ENCODE measurements at regions of chr5 and their contacts with region 1.

Region 1: DNA sequence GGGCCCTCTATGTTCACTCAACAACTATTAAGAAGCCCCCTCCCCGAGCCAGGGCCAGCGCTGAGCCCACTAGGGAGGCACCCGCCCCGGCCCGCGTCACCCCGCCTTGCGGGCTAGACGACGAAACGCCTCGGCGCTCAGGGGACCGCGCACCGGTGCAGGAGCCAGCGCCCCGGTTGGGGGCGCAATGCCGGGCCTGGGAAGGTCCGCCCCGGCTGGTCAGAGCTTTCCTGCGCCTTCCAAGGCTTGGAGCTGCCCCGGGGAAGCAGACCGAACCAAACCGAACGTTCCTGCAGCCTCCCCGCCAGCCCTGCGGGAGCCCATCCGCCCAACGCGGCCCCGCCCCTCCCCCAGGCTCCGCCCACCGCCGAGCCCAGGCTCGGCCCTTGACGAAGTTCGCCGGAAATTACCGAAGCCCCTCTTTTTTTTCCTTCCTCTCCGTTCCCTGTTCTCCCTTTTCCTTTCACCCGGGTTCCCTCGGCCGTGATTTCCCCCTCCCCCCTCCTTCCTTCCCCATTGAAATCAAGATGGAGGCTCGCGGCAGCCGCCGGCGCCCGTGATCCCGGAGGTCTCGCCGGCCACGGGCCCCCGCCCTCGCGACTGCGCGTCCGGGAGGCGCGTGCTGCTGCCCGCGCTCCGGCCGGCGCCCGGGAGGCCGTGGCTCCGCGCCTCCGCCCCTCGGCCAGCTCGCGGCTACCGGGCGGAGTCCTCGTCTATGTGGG is at the start of gene TRIO:
- DNase-seq: peak; percentile 92
- ATAC-seq: peak; percentile 81 to 87
- total RNA-seq, gene TRIO: 50.4 to 60.8 TPM

Region 2: GRCh38 chr5:14190194-14191164 is 47.5 kb after region 1 on chr5:
- intact Hi-C with region 1: loop called in 1 of 2 experiments (anchors 5 kb)
- DNase-seq: peak; percentile 52
- ATAC-seq: peak; percentile 64 to 96

Region 3: GRCh38 chr5:14264604-14265316 is 121.8 kb after region 1 on chr5:
- intact Hi-C with region 1: loop called in 1 of 2 experiments (anchors 10 kb)
- DNase-seq: peak; percentile 94
- ATAC-seq: peak; percentile 93 to 94